HAP-1 (cell line): ENCODE measurements at regions of chr12 and their contacts with region 1.

Region 1: GRCh38 chr12:11015775-11016430 is 6.5 kb downstream of the TAS2R19 start:
- DNase-seq: no peak
- H3K4me3 ChIP-seq: no peak overlapping the region
- H3K4me1 ChIP-seq: no peaks in the 10 kb centered on the region
- H3K27me3 ChIP-seq: no peaks in the 10 kb centered on the region

Region 2: GRCh38 chr12:11071414-11071813 is 55.5 kb after region 1 on chr12:
- in situ Hi-C with region 1: loop called (anchors 5 kb)
- DNase-seq: no peak
- H3K4me3 ChIP-seq: no peak overlapping the region
- H3K4me1 ChIP-seq: no peaks in the 10 kb centered on the region
- H3K27me3 ChIP-seq: no peaks in the 10 kb centered on the region